Activated naive CD8-positive, alpha-beta T cell treated with anti-CD3 and anti-CD28 coated beads, Interleukin-2, amount 10 ng/mL, durations not matched to agents 7 days and 5 days (primary cell): ENCODE measurements at regions of chr17 and their contacts with region 1.

Region 1: GRCh38 chr17:28967221-28968140 is 16.2 kb upstream of the PHF12 start:
- DNase-seq: no peak
- ATAC-seq: no peak
- H3K4me3 Mint-ChIP-seq: no peak overlapping the region
- H3K27ac Mint-ChIP-seq: no peak overlapping the region
- H3K4me1 Mint-ChIP-seq: peaks cover 6% of the 10 kb centered on the region
- H3K27me3 Mint-ChIP-seq: peaks cover 6% of the 10 kb centered on the region

Region 2: GRCh38 chr17:29019475-29020181 is 52.1 kb after region 1 on chr17:
- POLR2A ChIA-PET with region 1: no interaction called
- DNase-seq: no peak
- ATAC-seq: peak; percentile 42
- H3K4me3 Mint-ChIP-seq: peak overlapping the region; percentile 21
- H3K27ac Mint-ChIP-seq: no peak overlapping the region
- H3K4me1 Mint-ChIP-seq: peaks cover 7% of the 10 kb centered on the region
- H3K27me3 Mint-ChIP-seq: peaks cover 50% of the 10 kb centered on the region

Region 3: DNA sequence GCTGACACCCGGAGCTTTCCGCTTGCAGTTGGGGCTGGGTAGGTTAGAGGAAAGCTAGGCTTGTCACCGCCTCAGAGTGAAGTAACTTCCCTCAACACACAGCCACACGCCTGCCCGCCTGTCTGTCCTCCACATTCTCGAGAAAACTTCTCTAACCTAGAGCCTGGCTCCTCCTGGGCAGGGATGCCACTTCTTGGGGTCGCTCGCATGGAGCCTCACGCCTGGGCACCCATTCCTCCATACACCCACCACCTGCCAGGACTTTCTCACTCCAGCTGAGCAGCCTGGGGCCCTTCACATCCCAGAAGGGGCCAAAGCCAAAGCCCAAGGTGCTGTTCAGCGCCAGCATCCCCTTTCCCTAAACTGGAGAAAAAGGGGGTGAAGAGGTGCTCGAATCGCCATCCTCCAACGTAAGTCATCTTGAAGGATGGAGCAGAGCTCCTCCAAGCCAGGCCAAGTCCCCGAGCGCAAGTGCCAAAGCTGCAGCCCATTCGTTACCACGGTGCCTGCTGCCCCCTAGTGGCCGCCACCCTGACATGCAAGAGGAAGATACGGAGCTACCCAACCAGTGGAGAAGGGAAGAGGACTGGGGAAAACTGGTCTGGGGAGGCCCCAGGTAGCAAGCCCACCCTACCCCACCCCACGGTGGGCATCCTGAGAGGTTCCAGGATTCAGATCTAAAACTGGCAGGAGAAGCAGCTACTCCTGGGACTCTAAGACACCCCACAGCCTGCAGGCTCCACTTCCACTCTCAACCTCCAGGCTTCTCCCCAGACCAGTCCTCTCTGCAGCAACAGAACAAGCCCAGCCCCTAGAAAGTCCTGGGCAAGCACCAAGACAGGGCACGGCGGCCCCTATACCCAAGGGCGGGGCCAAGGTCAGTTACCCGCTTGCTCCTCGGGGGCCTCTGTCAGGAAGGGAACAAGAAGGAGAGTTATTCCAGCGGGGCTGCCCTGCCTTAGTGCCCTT is 149.6 kb after region 1 on chr17:
- POLR2A ChIA-PET with region 1: interaction called, 15 read pairs
- DNase-seq: peak; percentile 83
- ATAC-seq: peak; percentile 62
- H3K4me3 Mint-ChIP-seq: no peak overlapping the region
- H3K27ac Mint-ChIP-seq: no peak overlapping the region
- H3K4me1 Mint-ChIP-seq: peaks cover 7% of the 10 kb centered on the region
- H3K27me3 Mint-ChIP-seq: no peaks in the 10 kb centered on the region